Activated naive CD4-positive, alpha-beta T cell treated with anti-CD3 and anti-CD28 coated beads, Interleukin-2, amount 10 ng/mL, durations not matched to agents 7 days and 5 days (primary cell): ENCODE measurements at regions of chr5 and their contacts with region 1.

Region 1: GRCh38 chr5:154072414-154073171 is 33.8 kb downstream of the MFAP3 start:
- DNase-seq: peak; percentile 90
- H3K4me3 Mint-ChIP-seq: no peak overlapping the region
- H3K27ac Mint-ChIP-seq: no peak overlapping the region
- H3K4me1 Mint-ChIP-seq: peaks cover 58% of the 10 kb centered on the region
- H3K27me3 Mint-ChIP-seq: peaks cover 32% of the 10 kb centered on the region

Region 2: DNA sequence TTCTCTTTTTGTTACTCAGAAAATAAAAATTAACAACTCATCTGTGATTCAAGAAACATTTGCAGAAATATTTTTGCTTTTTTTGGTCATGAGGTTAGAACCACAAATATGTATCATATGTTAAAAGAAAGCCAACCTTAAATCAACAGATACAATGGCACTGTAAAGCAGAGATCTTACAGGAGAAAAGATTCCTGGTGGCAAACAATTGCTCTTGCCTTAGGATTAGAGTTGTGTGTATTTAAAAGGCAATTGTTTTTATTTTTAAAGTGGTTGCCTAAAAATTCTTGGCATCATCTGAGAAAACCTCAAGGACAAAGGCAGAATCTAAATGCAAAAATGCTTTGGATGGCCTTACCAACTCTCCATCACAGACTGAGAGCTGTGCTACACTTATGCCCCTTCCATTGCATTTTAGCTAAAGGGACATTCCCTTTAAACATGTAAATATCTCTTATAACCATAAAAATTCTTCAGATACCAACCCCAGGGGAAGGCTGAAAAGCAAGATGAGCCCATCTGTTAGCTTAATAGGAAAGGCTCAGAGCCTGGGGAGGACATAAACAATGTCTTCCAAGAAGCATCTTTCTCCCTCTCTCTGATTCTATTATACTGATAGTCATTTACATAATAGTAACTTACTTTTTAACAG is 134.3 kb before region 1 on chr5:
- CTCF ChIA-PET with region 1: no interaction called
- DNase-seq: no peak
- H3K4me3 Mint-ChIP-seq: no peak overlapping the region
- H3K27ac Mint-ChIP-seq: no peak overlapping the region
- H3K4me1 Mint-ChIP-seq: no peaks in the 10 kb centered on the region
- H3K27me3 Mint-ChIP-seq: no peaks in the 10 kb centered on the region

Region 3: DNA sequence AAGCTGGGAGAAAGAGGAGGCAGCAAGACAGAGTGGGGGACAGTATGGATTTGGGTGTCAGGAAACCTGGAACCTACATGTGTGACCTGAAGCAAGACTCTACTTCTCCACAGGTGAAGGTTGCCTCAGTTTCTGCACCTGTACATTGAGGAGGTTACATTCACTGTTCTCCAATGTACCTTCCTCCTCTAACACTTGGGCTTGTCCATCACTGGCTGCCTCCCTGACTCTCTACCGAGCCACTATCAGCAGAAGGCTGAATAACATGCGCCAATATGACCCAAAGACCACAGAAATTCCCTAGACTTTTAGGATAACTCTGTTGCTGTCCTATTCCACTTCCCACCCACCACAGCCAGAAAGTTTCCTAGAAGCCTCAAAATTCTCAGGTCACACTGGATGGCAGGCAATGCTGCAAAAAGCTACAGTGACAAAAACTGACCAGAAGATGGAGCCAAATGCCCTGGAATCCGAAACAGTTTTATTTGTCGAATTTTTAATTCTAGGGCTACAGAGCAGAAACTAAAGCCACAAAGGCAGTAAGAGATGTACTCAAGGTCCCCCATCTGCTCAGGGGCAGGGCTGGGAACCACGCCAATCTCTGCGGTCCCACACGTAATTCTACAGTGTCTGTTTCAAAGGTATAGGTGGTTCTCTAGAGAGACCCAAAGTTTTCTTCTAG is 98.3 kb before region 1 on chr5:
- CTCF ChIA-PET with region 1: interaction called, 27 read pairs
- DNase-seq: peak; percentile 56
- H3K4me3 Mint-ChIP-seq: no peak overlapping the region
- H3K27ac Mint-ChIP-seq: no peak overlapping the region
- H3K4me1 Mint-ChIP-seq: no peaks in the 10 kb centered on the region
- H3K27me3 Mint-ChIP-seq: peaks cover 34% of the 10 kb centered on the region

Region 4: GRCh38 chr5:154131817-154132216 is 59.2 kb after region 1 on chr5:
- CTCF ChIA-PET with region 1: no interaction called
- DNase-seq: no peak
- H3K4me3 Mint-ChIP-seq: no peak overlapping the region
- H3K27ac Mint-ChIP-seq: no peak overlapping the region
- H3K4me1 Mint-ChIP-seq: no peaks in the 10 kb centered on the region
- H3K27me3 Mint-ChIP-seq: peaks cover 29% of the 10 kb centered on the region

Region 5: GRCh38 chr5:154157483-154158378 is 85.1 kb after region 1 on chr5:
- CTCF ChIA-PET with region 1: interaction called, 12 read pairs
- DNase-seq: peak; percentile 33
- H3K4me3 Mint-ChIP-seq: no peak overlapping the region
- H3K27ac Mint-ChIP-seq: no peak overlapping the region
- H3K4me1 Mint-ChIP-seq: no peaks in the 10 kb centered on the region
- H3K27me3 Mint-ChIP-seq: peaks cover 54% of the 10 kb centered on the region

Region 6: GRCh38 chr5:154179846-154180710 is 107.5 kb after region 1 on chr5:
- CTCF ChIA-PET with region 1: interaction called, 116 read pairs
- DNase-seq: peak; percentile 52
- H3K4me3 Mint-ChIP-seq: no peak overlapping the region
- H3K27ac Mint-ChIP-seq: no peak overlapping the region
- H3K4me1 Mint-ChIP-seq: peaks cover 8% of the 10 kb centered on the region
- H3K27me3 Mint-ChIP-seq: peaks cover 36% of the 10 kb centered on the region

Region 7: DNA sequence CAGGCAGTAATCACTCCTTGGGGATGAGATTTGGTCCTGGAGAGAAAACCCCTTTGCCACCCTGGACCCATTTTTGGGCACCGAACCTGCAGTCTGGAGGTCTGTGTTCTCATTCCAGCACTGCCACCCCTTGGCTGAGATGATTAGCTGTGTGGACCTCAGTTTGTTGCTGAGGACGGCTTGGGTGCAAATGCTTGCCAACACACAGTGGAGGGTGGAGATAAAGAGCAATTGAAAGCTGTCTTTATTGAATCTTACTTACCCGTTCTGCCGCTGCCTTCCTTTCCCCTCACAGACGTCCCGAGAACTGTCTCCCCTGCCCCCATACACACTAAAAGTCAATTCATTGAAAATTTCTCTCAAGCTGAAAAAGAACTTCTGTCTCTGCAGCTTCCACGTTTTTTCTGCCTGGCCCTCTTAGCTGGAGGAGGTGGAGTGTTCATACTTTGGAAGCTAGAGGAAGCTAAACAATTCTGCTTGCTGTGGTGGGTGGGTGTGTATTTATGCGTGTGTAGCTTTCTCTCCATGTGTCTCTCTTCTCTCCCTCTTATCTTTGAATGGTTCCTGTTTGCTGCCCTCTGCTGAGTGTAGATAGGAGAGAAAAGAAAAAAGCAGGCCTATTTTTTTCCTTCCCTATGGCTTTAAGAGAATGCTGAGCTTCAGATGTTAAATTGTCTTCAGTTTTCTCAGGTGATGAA is 124.5 kb after region 1 on chr5:
- CTCF ChIA-PET with region 1: interaction called, 41 read pairs
- DNase-seq: no peak
- H3K4me3 Mint-ChIP-seq: no peak overlapping the region
- H3K27ac Mint-ChIP-seq: peak overlapping the region; percentile 87
- H3K4me1 Mint-ChIP-seq: peaks cover 63% of the 10 kb centered on the region
- H3K27me3 Mint-ChIP-seq: no peaks in the 10 kb centered on the region

Region 8: GRCh38 chr5:154405078-154405792 is 332.6 kb after region 1 on chr5:
- CTCF ChIA-PET with region 1: interaction called, 81 read pairs
- DNase-seq: peak; percentile 80
- H3K4me3 Mint-ChIP-seq: peak overlapping the region; percentile 15
- H3K27ac Mint-ChIP-seq: no peak overlapping the region
- H3K4me1 Mint-ChIP-seq: peaks cover 8% of the 10 kb centered on the region
- H3K27me3 Mint-ChIP-seq: no peaks in the 10 kb centered on the region